Psoas muscle (tissue), 8 donors: ENCODE measurements at regions of chrX and their contacts with region 1.

Region 1: GRCh38 chrX:68828740-68829552 is at the start of gene EFNB1:
- DNase-seq: peak; percentile 91 to 96
- ATAC-seq: peak; percentile 90 to 93 (median 92)
- H3K4me3 ChIP-seq: peak within 1 kb of the TSS; percentile 80
- H3K27ac ChIP-seq: peak within 1 kb of the TSS; percentile 74
- H3K4me1 ChIP-seq: peaks cover 8% of the 10 kb centered on the region
- H3K27me3 ChIP-seq: peaks cover 0 to 13% (median 0%) of the 10 kb centered on the region in 3 donors
- CTCF ChIP-seq: no peak
- total RNA-seq, gene EFNB1: 10.9 to 14.9 (median 11.3) TPM

Region 2: DNA sequence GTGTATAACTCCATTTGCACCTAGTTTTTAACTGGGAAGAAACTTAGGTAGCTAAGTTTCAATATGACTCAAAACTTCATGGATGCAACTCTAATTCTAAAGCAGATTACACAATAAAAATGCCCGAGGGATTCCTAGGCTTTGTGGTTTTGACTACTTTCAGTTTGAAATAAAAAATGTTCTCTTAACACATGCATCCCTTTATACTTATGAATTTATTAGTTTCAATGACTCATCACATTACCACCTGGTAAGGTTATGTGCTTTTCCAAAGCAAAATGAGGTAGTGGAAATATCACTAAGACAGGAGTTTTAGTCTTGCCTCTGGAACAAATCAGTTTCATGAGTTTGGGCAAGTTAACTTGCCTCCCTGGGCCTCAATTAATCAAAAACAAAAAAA is 521.2 kb before region 1 on chrX:
- intact Hi-C with region 1: no loop called
- DNase-seq: no peak
- ATAC-seq: no peak
- H3K4me3 ChIP-seq: no peak overlapping the region
- H3K27ac ChIP-seq: no peak overlapping the region
- H3K4me1 ChIP-seq: no peaks in the 10 kb centered on the region
- H3K27me3 ChIP-seq: peaks cover 0 to 6% (median 0%) of the 10 kb centered on the region in 3 donors
- CTCF ChIP-seq: no peak

Region 3: GRCh38 chrX:68504237-68504636 is 324.7 kb before region 1 on chrX:
- intact Hi-C with region 1: loop called in 1 of 2 experiments (anchors 10 kb)
- DNase-seq: no peak
- ATAC-seq: peak in 3 of 4 donors; percentile 60 to 85 (median 80)
- H3K4me3 ChIP-seq: no peak overlapping the region
- H3K27ac ChIP-seq: peak overlapping the region; percentile 75
- H3K4me1 ChIP-seq: peaks cover 36% of the 10 kb centered on the region
- H3K27me3 ChIP-seq: peaks cover 0 to 6% (median 0%) of the 10 kb centered on the region in 3 donors
- CTCF ChIP-seq: no peak

Region 4: DNA sequence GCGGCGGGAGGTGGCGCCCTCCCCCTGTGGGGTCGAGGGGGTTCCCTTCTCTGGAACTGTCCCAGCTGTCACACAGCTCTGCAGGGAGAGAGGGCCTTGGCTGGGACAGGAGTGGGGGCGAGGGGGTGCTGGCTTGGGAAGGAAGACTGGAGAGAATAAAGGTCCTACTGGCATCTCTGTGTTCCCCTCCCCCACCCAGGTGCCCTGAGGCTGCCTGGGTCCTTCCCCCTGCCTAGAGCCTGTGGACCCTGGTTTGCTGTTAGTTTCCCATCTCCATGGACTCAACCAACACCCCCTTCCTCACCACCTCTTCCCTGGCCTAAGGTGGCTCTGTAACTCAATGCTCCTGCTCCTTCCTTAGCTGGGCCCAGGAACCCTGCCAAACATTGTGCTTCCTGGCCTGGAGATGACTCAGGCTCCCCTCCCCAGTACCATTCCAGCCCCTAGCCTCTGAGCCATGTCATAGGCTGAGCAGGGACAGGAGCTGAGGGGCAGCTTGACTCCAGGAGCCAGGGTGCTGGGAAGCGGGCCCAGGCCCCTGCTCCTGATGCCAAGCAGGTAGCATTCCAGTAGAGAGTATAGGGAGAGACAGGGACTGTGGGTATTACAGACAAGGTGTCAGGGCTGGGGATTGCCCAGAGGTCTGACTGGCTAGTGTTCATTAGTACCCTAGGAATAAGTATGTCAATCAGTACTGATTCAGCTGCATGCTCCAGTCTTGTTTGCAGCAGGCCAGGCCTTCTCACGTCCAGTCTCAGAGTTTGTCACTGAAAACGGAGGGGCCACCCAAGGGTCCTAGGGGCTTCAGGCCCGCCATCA is 100.6 kb after region 1 on chrX:
- intact Hi-C with region 1: loop called (anchors 5 to 10 kb)
- DNase-seq: peak; percentile 52 to 69
- ATAC-seq: peak; percentile 84 to 87 (median 85)
- H3K4me3 ChIP-seq: no peak overlapping the region
- H3K27ac ChIP-seq: peak overlapping the region; percentile 61
- H3K4me1 ChIP-seq: no peaks in the 10 kb centered on the region
- H3K27me3 ChIP-seq: peaks cover 0 to 7% (median 0%) of the 10 kb centered on the region in 3 donors
- CTCF ChIP-seq: no peak

Region 5: GRCh38 chrX:69060631-69061408 is 231.9 kb after region 1 on chrX:
- intact Hi-C with region 1: loop called in 1 of 2 experiments (anchors 1 kb)
- DNase-seq: no peak
- ATAC-seq: peak; percentile 40 to 80 (median 74)
- H3K4me3 ChIP-seq: no peak overlapping the region
- H3K27ac ChIP-seq: no peak overlapping the region
- H3K4me1 ChIP-seq: no peaks in the 10 kb centered on the region
- H3K27me3 ChIP-seq: peaks cover 0 to 16% (median 0%) of the 10 kb centered on the region in 3 donors
- CTCF ChIP-seq: peak; percentile 29

Region 6: DNA sequence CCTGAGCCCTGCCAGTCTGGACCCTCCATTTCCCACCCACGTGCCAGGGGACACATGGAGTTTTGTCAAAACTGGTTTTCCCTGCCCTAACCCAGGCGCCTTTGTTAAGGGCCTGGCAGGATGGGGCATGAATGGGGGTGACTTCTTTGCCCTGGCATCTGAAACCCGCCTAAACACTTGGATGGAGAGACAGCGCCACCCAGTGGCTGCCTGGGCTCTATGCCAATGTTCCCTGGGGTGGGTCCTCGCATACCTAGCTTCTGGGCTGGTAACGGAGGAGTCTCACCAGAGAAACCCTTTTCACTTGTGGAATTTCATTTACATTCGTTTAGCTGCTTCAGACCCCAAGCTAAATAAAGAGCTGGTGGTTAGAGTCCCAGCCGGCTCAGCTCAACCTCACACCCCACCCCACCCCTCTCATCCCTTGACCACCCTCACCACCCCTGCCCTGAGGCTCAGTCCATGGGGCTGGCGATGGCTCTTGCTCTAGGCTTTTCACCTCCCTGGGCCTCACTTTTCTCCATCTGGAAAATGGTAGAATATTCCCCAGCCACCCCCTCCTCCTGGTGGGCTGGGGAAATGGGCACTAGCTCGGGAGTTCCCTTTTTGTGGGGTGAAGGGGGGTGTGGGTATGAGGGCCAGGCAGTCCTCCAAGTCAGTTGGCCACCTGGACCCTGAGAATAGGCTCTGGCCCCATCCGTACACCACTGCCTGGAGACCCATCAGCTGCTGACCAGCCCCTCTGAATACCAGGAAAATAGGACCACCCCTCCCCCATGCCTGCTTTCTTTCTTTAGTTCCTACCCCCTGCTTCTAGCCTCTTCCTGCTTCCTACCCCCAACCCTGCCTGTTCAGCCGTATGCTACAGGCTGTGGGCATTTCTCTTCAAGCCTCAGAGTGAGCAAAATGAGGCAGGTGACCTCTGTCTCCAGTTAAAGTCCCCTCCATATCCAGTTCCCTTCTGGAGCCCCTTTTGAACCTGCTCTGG is 393.5 kb after region 1 on chrX:
- intact Hi-C with region 1: loop called in 1 of 2 experiments (anchors 5 kb)
- DNase-seq: peak; percentile 56 to 80
- ATAC-seq: peak; percentile 75 to 88 (median 83)
- H3K4me3 ChIP-seq: no peak overlapping the region
- H3K27ac ChIP-seq: no peak overlapping the region
- H3K4me1 ChIP-seq: no peaks in the 10 kb centered on the region
- H3K27me3 ChIP-seq: peaks cover 0 to 13% (median 0%) of the 10 kb centered on the region in 3 donors
- CTCF ChIP-seq: peak; percentile 75

Region 7: GRCh38 chrX:69387567-69388487 is 558.9 kb after region 1 on chrX:
- intact Hi-C with region 1: loop called in 1 of 2 experiments (anchors 5 kb)
- DNase-seq: peak; percentile 36 to 70
- ATAC-seq: peak; percentile 57 to 78 (median 65)
- H3K4me3 ChIP-seq: no peak overlapping the region
- H3K27ac ChIP-seq: no peak overlapping the region
- H3K4me1 ChIP-seq: no peaks in the 10 kb centered on the region
- H3K27me3 ChIP-seq: peaks cover 0 to 36% (median 0%) of the 10 kb centered on the region in 3 donors
- CTCF ChIP-seq: peak; percentile 70